ENCODE measurements at regions of chr9 and their contacts with region 1.

Region 1: DNA sequence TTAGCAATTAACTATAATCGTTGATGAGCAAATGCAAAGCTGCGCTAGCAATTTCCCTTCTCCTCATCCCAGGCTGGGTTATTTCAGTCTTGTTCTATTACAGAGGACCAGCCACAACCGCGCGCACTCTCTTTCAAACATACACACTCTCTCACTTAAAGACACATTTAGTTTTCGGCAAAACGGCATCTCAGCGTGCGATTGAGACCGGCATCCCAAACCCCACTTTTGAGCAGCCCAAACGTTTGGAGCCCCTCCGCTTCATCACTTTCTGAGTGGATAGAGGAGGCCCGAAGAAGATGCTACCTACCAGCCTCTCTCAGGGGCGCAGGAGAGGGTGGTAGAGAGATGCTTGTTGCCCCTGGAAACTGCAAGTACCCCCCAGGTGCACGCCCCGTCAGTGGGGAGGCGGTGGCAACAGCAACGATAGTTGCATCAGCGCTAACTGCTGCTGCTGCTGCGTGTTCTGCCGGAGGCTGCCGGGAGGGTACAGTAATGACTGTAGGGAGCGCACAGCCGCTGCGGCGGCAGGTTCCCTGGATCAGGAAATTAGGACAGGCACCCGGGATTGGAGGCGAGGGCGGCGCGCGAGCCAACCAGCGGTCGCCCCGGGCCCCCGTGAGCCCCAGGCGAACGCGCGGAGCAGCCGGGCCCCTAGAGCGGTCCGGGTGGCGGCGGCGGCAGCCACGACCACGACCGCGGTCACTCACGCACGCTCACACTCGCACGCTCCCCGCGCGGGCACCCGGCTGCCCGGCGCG is 488 bp upstream of the VLDLR start:
- DNase-seq: peak; percentile 44
- H3K4me3 Mint-ChIP-seq: peak overlapping the region; percentile 90
- H3K27ac Mint-ChIP-seq: peak overlapping the region; percentile 93
- H3K4me1 Mint-ChIP-seq: peaks cover 17% of the 10 kb centered on the region
- H3K27me3 Mint-ChIP-seq: peaks cover 26% of the 10 kb centered on the region

Region 2: DNA sequence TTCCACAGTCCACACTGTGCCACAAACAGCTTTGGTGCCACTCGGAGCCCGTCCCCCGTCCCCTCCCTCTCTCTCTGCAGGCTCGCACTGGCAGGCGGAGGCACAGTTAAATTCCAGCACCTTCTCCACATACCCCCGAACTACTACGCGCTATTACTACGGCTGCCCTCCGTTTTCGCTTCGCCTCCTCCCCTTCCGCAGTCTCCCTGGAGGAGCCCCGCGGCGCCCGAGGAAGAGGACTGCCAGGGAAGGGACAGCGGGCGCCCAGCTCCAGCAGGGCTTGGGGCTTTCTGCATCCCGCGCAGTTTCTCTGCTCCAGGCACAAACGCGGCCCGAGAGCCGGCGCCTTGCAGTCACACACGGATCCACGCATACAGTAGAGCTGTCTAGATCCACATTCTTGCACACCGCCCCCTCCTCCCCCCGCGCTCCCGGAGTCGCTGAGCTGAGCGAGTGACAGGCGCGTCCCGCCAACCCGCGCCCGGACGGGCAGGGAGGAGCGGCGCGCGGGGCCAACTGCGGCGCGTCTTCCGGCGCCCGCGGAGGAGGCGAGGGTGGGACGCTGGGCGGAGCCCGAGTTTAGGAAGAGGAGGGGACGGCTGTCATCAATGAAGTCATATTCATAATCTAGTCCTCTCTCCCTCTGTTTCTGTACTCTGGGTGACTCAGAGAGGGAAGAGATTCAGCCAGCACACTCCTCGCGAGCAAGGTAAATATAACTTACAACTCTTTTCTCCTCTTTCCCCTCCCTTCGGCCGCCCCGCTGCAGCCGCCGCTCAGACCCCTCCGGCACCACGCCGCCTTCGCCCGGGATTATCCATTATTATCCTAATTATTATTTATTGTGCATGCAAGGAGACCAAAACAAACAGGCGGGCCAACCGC is 606.2 kb before region 1 on chr9 and contains the start of gene SMARCA2:
- intact Hi-C with region 1: loop called (anchors 5 kb)
- DNase-seq: peak; percentile 97
- H3K4me3 Mint-ChIP-seq: peak within 1 kb of the TSS; percentile 99
- H3K27ac Mint-ChIP-seq: peak within 1 kb of the TSS; percentile 99
- H3K4me1 Mint-ChIP-seq: peaks cover 44% of the 10 kb centered on the region
- H3K27me3 Mint-ChIP-seq: peaks cover 5% of the 10 kb centered on the region
- total RNA-seq, gene SMARCA2: 105 and 108 TPM in 2 replicates

Region 3: DNA sequence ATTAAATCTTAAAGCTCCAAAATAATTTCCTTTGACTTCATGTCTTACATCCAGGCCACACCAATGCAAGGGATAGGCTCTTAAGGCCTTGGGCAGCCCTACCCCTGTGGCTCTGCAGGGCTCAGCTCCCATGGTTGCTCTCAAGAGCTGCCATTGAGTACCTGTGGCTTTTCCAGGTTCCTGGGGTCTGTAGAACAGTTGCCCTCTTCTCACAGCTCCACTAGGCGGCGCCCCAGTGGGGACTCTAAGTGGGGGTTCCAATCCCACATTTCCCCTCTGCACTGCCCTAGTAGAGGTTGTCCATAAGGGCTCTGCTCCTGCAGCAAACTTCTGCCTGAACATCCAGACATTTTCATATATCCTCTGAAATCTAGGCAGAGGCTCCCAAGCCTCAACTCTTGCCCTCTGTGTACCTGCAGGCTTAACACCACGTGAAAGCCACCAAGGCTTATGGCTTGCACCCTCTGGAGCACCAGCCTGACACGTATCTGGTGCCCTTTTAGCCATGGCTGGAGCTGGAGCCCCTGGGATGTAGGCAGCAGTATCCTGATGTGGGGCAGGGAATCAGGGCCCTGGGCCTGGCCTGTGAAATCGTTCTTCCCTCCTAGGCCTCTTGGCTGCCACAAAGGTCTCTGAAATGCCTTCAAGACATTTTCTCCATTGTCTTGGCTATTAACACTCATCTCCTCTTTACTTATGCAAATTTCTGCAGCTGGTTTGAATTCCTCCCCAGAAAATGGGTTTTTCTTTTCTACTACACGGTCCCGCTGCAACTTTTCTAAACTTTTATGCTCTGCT is 420.9 kb before region 1 on chr9:
- intact Hi-C with region 1: loop called (anchors 10 kb)
- DNase-seq: no peak
- H3K4me3 Mint-ChIP-seq: no peak overlapping the region
- H3K27ac Mint-ChIP-seq: peak overlapping the region; percentile 25
- H3K4me1 Mint-ChIP-seq: peaks cover 11% of the 10 kb centered on the region
- H3K27me3 Mint-ChIP-seq: no peaks in the 10 kb centered on the region

Region 4: DNA sequence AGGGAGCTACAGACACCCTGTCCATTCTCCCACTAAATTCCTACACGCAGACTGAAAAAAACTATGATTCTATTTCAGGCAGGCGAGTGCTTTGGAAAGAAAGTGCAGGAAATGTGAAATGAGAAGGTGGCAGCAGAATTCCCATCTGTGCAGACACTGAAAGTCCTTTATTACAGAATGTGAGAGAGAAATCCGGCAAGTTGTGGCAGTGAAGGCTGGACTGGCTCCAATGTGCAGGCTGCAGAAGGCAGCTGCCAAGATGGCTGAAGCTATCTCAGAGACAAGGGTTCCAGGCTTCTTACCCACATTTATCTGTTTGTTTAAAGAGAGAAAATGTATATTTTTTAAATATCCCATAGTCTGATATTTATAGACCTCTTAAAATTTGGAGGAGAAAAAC is 161.3 kb before region 1 on chr9:
- intact Hi-C with region 1: no loop called
- DNase-seq: no peak
- H3K4me3 Mint-ChIP-seq: no peak overlapping the region
- H3K27ac Mint-ChIP-seq: no peak overlapping the region
- H3K4me1 Mint-ChIP-seq: no peaks in the 10 kb centered on the region
- H3K27me3 Mint-ChIP-seq: peaks cover 2% of the 10 kb centered on the region

Region 5: DNA sequence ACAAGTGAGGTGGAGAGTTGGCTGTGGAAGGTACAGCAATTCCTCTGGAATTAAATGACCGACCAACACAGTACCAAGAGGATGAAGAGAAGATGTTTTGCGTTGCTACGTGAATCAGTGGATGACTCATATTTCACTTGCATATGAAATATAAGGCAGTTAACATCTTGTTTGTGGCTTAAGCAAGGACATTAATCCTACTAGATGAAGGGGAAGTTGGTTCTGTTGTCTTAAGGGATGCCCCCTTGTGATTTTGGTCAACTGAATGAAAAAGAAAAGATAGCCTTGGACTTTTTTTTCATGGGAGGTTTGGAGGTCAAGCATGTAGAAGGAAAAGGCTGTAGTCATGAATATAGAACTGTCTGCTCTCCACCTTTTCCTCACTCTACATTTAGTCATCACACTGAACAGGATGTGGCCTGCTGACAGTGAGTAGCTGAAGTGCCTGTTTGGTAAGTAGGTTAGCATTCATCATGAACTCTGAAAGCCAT is 34.4 kb after region 1 on chr9:
- intact Hi-C with region 1: loop called (anchors 1 kb)
- DNase-seq: peak; percentile 43
- H3K4me3 Mint-ChIP-seq: peak overlapping the region; percentile 15
- H3K27ac Mint-ChIP-seq: peak overlapping the region; percentile 94
- H3K4me1 Mint-ChIP-seq: peaks cover 24% of the 10 kb centered on the region
- H3K27me3 Mint-ChIP-seq: no peaks in the 10 kb centered on the region

Region 6: GRCh38 chr9:2727966-2728613 is 107.0 kb after region 1 on chr9:
- intact Hi-C with region 1: loop called (anchors 2 kb)
- DNase-seq: no peak
- H3K4me3 Mint-ChIP-seq: no peak overlapping the region
- H3K27ac Mint-ChIP-seq: no peak overlapping the region
- H3K4me1 Mint-ChIP-seq: no peaks in the 10 kb centered on the region
- H3K27me3 Mint-ChIP-seq: no peaks in the 10 kb centered on the region

Region 7: DNA sequence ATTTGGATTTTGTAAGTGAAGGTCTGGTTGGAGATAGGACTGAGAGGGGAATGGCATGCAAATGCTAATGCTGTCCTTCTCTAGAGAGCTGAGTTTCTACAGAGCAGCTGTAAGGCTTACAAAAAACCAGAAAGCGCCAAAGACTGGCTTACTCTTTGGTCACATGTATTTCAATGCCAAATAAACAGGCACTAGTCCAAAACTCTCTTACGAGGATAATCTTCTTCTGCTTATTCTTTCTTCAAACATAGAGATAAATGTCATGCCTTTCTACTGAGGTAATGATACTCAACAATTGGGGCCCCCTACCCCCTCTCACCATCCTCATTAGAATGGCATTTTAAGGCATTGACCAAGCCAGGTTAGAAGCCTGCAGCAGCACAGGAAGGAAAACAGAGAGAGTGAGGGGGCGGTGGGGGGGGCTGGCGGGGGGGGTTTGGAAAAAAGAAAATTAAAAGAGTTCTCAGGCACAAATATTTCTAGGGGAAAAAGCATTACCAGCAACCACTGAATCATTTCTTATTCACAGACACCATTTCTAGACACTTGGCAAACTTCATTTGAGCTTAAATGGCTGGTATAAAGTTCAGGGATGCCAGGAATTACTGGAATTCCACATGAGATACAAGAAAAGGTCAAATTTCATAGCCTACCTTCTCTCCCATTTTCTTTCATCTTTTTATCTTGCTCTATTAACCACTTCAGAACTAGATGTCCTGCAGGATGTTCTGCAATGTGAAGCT is 188.8 kb after region 1 on chr9:
- intact Hi-C with region 1: loop called (anchors 10 kb)
- DNase-seq: no peak
- H3K4me3 Mint-ChIP-seq: no peak overlapping the region
- H3K27ac Mint-ChIP-seq: no peak overlapping the region
- H3K4me1 Mint-ChIP-seq: no peaks in the 10 kb centered on the region
- H3K27me3 Mint-ChIP-seq: no peaks in the 10 kb centered on the region

Region 8: GRCh38 chr9:3136686-3137346 is 515.7 kb after region 1 on chr9:
- intact Hi-C with region 1: no loop called
- DNase-seq: no peak
- H3K4me3 Mint-ChIP-seq: no peak overlapping the region
- H3K27ac Mint-ChIP-seq: no peak overlapping the region
- H3K4me1 Mint-ChIP-seq: no peaks in the 10 kb centered on the region
- H3K27me3 Mint-ChIP-seq: peaks cover 4% of the 10 kb centered on the region

Measured in activated T-helper 1 cell treated with anti-CD3 and anti-CD28 coated beads, Interleukin-12 subunit alpha, Interleukin-12 subunit beta, Interleukin-2, Interleukin-4 antibody, amounts not matched to agents 30 ng/mL and 10 ng/mL and 1 ng/mL, durations not matched to agents 14 hours and 24 hours and 36 hours (primary cell).